Heart left ventricle (tissue), 16 donors: ENCODE measurements at regions of chr7 and their contacts with region 1.

Region 1: DNA sequence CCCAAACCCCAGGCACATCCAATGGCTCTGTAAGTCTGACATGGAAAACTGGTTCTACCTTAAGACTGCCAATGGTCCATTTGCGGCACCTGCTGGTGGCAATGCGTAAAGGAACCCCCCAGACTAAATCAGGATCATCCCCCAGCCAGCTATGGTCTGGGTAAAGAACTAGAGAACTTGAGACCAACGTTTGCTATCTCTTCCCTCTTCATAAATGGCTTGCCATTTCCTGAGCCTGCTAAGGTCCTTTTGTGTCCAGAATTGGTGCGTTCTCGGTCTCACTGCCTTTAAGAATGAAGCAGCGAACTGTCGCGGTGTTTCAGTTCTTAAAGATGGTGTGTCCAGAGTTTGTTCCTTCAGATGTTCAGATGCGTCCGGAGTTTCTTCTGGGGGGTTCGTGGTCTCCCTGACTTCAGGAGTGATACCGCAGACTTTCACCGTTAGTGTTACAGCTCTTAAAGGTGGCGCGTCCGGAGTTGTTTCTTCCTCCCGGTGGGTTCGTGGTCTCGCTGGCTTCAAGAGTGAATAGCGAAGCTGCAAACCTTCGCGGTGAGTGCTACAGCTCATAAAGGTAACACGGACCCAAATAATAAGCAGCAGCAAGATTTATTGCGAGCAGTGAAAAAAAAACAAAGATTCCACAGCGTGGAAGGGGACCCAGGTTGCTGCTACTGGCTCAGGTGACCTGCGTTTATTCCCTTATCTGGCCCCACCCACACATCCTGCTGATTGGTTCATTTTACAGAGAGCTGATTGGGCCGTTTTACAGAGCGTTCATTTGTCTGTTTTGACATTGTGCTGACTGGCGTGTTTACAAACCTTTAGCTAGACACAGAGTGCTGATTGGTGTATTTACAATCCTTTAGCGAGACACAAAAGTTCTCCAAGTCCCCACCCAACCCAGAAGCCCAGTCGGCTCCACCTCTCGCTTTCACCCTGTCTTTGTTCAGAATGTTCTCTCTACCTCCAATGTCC is 95.4 kb downstream of the ELMO1 start:
- DNase-seq: peak in 3 of 5 donors; percentile 21 to 42 (median 34)
- ATAC-seq: peak in 2 of 4 donors; percentile 4 to 5
- H3K4me3 ChIP-seq: peak overlapping the region in 4 of 12 donors; percentile 1 to 53 (median 13)
- H3K27ac ChIP-seq: peak overlapping the region in 11 of 12 donors; percentile 45 to 87 (median 77)
- H3K4me1 ChIP-seq: peaks cover 6 to 81% (median 44%) of the 10 kb centered on the region in 12 donors
- H3K27me3 ChIP-seq: no peaks in the 10 kb centered on the region
- CTCF ChIP-seq: peak in 4 of 12 donors; percentile 21 to 42 (median 22)
- POLR2A ChIP-seq: no peak

Region 2: GRCh38 chr7:37208528-37208927 is 144.7 kb before region 1 on chr7:
- intact Hi-C with region 1: loop called in 2 of 10 experiments (anchors 5 to 10 kb)
- DNase-seq: peak in 4 of 5 donors; percentile 73 to 76 (median 74)
- ATAC-seq: peak; percentile 85 to 93 (median 90)
- H3K4me3 ChIP-seq: no peak overlapping the region
- H3K27ac ChIP-seq: peak overlapping the region; percentile 6 to 75 (median 56)
- H3K4me1 ChIP-seq: peaks cover 0 to 33% (median 22%) of the 10 kb centered on the region in 12 donors
- H3K27me3 ChIP-seq: no peaks in the 10 kb centered on the region
- CTCF ChIP-seq: peak; percentile 51 to 82 (median 59)
- POLR2A ChIP-seq: no peak

Region 3: GRCh38 chr7:37216156-37216852 is 137.0 kb before region 1 on chr7:
- intact Hi-C with region 1: loop called in 3 of 10 experiments (anchors 5 to 10 kb)
- DNase-seq: peak in 1 of 5 donors; percentile 29
- ATAC-seq: peak in 3 of 4 donors; percentile 69 to 82 (median 77)
- H3K4me3 ChIP-seq: no peak overlapping the region
- H3K27ac ChIP-seq: peak overlapping the region in 5 of 12 donors; percentile 4 to 40 (median 37)
- H3K4me1 ChIP-seq: peaks cover 0 to 55% (median 30%) of the 10 kb centered on the region in 12 donors
- H3K27me3 ChIP-seq: no peaks in the 10 kb centered on the region
- CTCF ChIP-seq: no peak
- POLR2A ChIP-seq: no peak

Region 4: DNA sequence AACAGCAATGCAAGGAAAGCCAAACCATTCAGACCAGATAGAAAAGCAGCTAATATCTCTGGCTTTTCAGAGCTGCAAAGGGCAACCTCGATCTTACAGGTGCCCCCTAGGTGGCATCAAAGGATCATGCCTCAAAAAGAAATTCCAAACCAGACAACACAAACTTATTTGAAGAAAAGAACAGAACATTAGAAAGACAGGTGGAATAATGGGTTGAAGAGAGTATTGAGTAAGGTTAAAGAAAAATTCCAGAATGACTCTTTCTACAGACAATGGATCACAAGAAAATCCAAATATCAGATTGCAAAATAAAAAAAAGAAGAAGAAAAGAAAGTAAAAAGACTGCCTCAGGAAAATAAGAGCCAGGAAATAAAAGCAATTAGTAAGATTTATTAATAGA is 118.3 kb before region 1 on chr7:
- intact Hi-C with region 1: loop called in 1 of 10 experiments (anchors 10 kb)
- DNase-seq: no peak
- ATAC-seq: no peak
- H3K4me3 ChIP-seq: no peak overlapping the region
- H3K27ac ChIP-seq: no peak overlapping the region
- H3K4me1 ChIP-seq: peaks cover 0 to 10% (median 1%) of the 10 kb centered on the region in 12 donors
- H3K27me3 ChIP-seq: no peaks in the 10 kb centered on the region
- CTCF ChIP-seq: peak; percentile 27 to 65 (median 52)
- POLR2A ChIP-seq: no peak

Region 5: GRCh38 chr7:37275078-37275710 is 78.1 kb before region 1 on chr7:
- intact Hi-C with region 1: no loop called
- DNase-seq: no peak
- ATAC-seq: peak in 1 of 4 donors; percentile 20
- H3K4me3 ChIP-seq: no peak overlapping the region
- H3K27ac ChIP-seq: no peak overlapping the region
- H3K4me1 ChIP-seq: peaks cover 0 to 21% (median 5%) of the 10 kb centered on the region in 12 donors
- H3K27me3 ChIP-seq: no peaks in the 10 kb centered on the region
- CTCF ChIP-seq: no peak
- POLR2A ChIP-seq: no peak

Region 6: DNA sequence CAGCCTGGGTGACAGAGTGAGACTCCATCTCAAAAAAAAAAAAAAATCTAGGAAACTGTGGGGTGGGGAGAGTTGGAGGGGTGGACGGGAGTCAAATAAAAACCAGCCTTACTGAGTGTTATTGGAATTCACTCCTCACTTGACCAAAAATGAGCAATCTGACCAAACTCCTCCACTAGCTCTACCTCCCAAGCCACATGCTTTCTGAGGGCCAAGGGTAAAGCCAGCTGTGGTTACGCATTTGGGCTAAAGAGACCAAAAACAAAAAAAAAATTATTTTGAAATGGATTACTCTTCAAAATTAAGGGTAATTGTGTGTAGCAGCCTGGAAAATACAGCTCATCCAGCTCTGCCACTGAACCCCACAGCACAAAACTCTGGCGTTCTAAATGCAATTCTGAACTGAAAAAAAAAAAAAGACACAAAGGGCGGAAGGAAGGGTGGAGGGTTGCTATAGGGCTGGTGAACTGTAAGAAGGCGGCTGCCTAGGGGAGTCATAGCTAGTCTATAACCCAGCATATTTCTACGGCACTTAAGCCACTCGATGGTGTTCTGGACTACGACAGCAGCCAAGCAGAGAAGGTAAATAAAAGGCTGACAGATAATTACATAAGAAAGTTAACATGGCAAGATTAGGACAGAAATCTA is 87.6 kb after region 1 on chr7:
- intact Hi-C with region 1: loop called in 6 of 10 experiments (anchors 2 to 10 kb)
- DNase-seq: peak in 3 of 5 donors; percentile 31 to 44 (median 35)
- ATAC-seq: peak; percentile 76 to 93 (median 84)
- H3K4me3 ChIP-seq: peak overlapping the region in 5 of 12 donors; percentile 2 to 17 (median 7)
- H3K27ac ChIP-seq: peak overlapping the region; percentile 57 to 91 (median 81)
- H3K4me1 ChIP-seq: peaks cover 3 to 82% (median 34%) of the 10 kb centered on the region in 12 donors
- H3K27me3 ChIP-seq: no peaks in the 10 kb centered on the region
- CTCF ChIP-seq: no peak
- POLR2A ChIP-seq: no peak